ENCODE measurements at regions of chr14 and their contacts with region 1.

Region 1: GRCh38 chr14:104657101-104657524 is 32.3 kb upstream of the INF2 start:
- DNase-seq: no peak
- H3K4me3 ChIP-seq: no peak overlapping the region
- H3K27ac ChIP-seq: no peak overlapping the region
- H3K4me1 ChIP-seq: peaks cover 30% of the 10 kb centered on the region
- H3K27me3 ChIP-seq: peaks cover 16% of the 10 kb centered on the region
- CTCF ChIP-seq: no peak

Region 2: DNA sequence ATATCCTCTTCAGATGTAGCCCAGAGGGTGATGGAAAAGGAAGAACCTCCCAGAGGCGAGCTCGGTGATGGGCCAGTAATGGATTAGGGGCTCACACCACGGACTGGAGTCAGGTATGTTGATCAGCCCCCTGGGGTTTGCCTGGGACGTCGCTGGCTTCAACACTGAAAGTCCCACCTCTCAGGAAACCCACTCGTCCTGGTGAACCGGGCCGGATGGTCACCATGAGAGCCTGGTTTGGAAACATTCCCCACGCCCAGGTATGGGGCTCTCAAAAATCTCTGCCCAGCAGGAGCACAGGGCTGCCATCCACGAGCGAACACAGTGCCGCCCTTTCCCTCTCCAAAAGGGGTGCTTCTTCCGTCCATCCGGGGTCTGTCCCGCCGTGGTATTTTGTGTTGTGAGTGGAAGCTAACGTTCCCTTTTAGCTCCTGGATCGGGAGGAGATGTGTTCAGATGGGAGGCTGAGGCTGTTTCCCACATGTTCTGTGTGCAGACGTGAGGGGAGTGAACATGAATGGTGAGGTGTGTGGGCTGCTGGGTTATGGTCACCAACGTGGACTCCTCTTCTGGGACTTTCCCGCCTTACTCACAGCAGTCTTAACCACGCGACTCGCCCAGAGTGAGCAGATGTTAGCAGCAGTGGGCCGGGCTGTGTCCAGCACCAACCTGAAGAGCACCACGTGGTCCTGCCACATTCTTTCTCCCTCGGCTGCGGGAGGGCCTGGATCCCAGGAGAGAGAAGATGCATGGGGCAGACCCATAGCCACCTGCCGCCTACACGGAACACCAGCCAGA is 379.5 kb before region 1 on chr14:
- intact Hi-C with region 1: no loop called
- DNase-seq: peak; percentile 11
- H3K4me3 ChIP-seq: no peak overlapping the region
- H3K27ac ChIP-seq: no peak overlapping the region
- H3K4me1 ChIP-seq: no peaks in the 10 kb centered on the region
- H3K27me3 ChIP-seq: peaks cover 51% of the 10 kb centered on the region
- CTCF ChIP-seq: no peak

Region 3: GRCh38 chr14:104694991-104695659 is 38.0 kb after region 1 on chr14:
- intact Hi-C with region 1: loop called (anchors 5 kb)
- DNase-seq: peak; percentile 53
- H3K4me3 ChIP-seq: peak overlapping the region; percentile 41
- H3K27ac ChIP-seq: peak overlapping the region; percentile 88
- H3K4me1 ChIP-seq: peaks cover 100% of the 10 kb centered on the region
- H3K27me3 ChIP-seq: no peaks in the 10 kb centered on the region
- CTCF ChIP-seq: no peak

Region 4: GRCh38 chr14:105005929-105006830 is 349.1 kb after region 1 on chr14:
- intact Hi-C with region 1: no loop called
- DNase-seq: no peak
- H3K4me3 ChIP-seq: no peak overlapping the region
- H3K27ac ChIP-seq: no peak overlapping the region
- H3K4me1 ChIP-seq: no peaks in the 10 kb centered on the region
- H3K27me3 ChIP-seq: no peaks in the 10 kb centered on the region
- CTCF ChIP-seq: no peak

Measured in left ventricle myocardium inferior (tissue), 1 donor.